Kidney (tissue), 22 donors: ENCODE measurements at regions of chr12 and their contacts with region 1.

Region 1: DNA sequence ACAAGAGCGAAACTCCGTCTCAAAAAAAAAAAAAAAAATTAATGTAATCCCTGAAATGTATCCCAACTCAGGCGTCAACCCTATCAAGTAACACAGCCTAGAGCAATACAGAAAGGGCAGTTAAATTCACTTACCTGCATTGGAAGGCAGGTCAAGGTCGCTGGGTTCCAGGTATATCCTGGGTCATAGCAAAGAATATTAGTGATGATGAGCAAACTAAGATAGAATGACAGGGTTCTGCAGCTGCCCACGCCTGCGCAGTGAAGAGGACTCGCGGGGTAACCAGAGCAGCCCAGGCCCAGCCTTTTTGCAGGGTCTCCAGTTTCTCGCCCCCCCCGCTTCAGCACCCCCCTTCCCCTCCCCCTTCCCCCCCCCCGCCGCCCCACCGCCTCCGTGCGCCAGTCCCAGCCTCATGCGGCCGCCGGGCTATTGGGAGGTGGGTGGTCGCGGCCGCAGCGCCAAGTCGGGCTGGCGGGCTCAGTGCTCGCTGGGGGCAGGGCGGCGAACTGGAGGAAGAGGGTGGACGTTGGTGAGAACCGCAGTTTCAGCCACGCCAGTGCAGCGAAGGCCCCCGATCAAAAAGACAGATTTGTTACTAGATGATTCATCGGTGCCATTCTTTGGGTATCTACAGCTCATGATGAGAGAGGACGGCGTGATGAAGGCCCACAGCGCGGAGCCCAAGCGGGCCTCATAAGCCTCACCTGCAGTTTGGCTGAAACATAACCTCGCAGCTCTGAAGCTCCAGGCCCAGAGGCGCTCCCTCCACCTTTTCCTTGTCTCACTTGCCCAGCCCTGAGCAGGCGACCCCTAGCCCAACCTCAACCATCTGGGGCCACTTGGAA is 20.2 kb downstream of the SLC2A3 start:
- DNase-seq: peak in 4 of 5 donors; percentile 41 to 65 (median 52)
- H3K4me3 ChIP-seq: no peak overlapping the region
- H3K27ac ChIP-seq: no peak overlapping the region
- H3K4me1 ChIP-seq: no peaks in the 10 kb centered on the region
- H3K27me3 ChIP-seq: no peaks in the 10 kb centered on the region
- CTCF ChIP-seq: no peak

Region 2: GRCh38 chr12:8011331-8011730 is 95.5 kb after region 1 on chr12:
- intact Hi-C with region 1: loop called (anchors 5 kb)
- DNase-seq: no peak
- H3K4me3 ChIP-seq: no peak overlapping the region
- H3K27ac ChIP-seq: no peak overlapping the region
- H3K4me1 ChIP-seq: no peaks in the 10 kb centered on the region
- H3K27me3 ChIP-seq: peaks cover 2% of the 10 kb centered on the region
- CTCF ChIP-seq: no peak